Heart left ventricle (tissue), 16 donors: ENCODE measurements at regions of chr11 and their contacts with region 1.

Region 1: GRCh38 chr11:76207642-76208401 is 1.5 kb upstream of the WNT11 start:
- DNase-seq: peak; percentile 79 to 91 (median 84)
- ATAC-seq: peak; percentile 61 to 80 (median 71)
- H3K4me3 ChIP-seq: peak overlapping the region; percentile 45 to 82 (median 68)
- H3K27ac ChIP-seq: peak overlapping the region in 8 of 12 donors; percentile 55 to 84 (median 75)
- H3K4me1 ChIP-seq: peaks cover 0 to 61% (median 34%) of the 10 kb centered on the region in 12 donors
- H3K27me3 ChIP-seq: peaks cover 0 to 75% (median 0%) of the 10 kb centered on the region in 9 donors
- CTCF ChIP-seq: peak; percentile 96 to 99 (median 98)
- POLR2A ChIP-seq: no peak

Region 2: GRCh38 chr11:75896843-75897419 is 310.9 kb before region 1 on chr11:
- intact Hi-C with region 1: loop called in 3 of 10 experiments (anchors 2 to 5 kb)
- DNase-seq: no peak
- ATAC-seq: peak in 2 of 4 donors; percentile 33 to 43
- H3K4me3 ChIP-seq: no peak overlapping the region
- H3K27ac ChIP-seq: no peak overlapping the region
- H3K4me1 ChIP-seq: peaks cover 0 to 25% (median 5%) of the 10 kb centered on the region in 12 donors
- H3K27me3 ChIP-seq: no peaks in the 10 kb centered on the region
- CTCF ChIP-seq: peak; percentile 56 to 83 (median 74)
- POLR2A ChIP-seq: no peak

Region 3: DNA sequence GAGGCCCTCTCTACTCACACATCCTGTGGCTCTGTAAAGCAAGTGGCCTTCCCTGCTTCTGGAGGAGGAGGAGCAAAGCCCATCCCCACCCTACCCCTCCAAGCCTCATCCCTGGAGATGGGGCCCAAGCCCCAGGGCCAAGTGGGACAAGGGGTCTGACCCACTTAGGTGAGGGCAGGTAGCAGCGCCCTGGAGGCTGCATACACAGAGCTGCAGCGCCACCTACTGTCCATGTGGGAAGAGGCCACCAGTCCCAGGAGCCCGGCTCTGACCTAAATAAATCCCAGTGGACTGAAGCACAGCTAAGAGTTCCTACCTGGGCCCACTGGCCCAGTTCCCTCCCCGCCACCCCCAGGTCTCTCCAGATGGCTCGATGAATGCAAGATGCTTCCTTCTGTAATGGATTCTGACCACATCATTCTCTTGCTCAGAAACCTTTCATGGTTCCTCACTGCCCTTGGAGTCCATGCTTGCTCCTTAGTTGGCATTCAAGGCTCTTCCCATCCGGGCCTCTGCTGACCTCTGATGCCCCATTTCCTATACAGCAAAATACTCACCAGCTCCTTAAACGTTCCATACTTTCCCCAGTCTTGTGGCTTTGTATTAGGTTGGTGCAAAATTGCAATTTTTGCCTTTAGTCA is 111.0 kb after region 1 on chr11:
- intact Hi-C with region 1: loop called (anchors 1 to 5 kb)
- DNase-seq: peak; percentile 77 to 89 (median 78)
- ATAC-seq: peak; percentile 83 to 93 (median 90)
- H3K4me3 ChIP-seq: no peak overlapping the region
- H3K27ac ChIP-seq: no peak overlapping the region
- H3K4me1 ChIP-seq: peaks cover 0 to 13% (median 2%) of the 10 kb centered on the region in 12 donors
- H3K27me3 ChIP-seq: peaks cover 0 to 24% (median 5%) of the 10 kb centered on the region in 9 donors
- CTCF ChIP-seq: peak; percentile 83 to 95 (median 92)
- POLR2A ChIP-seq: no peak

Region 4: DNA sequence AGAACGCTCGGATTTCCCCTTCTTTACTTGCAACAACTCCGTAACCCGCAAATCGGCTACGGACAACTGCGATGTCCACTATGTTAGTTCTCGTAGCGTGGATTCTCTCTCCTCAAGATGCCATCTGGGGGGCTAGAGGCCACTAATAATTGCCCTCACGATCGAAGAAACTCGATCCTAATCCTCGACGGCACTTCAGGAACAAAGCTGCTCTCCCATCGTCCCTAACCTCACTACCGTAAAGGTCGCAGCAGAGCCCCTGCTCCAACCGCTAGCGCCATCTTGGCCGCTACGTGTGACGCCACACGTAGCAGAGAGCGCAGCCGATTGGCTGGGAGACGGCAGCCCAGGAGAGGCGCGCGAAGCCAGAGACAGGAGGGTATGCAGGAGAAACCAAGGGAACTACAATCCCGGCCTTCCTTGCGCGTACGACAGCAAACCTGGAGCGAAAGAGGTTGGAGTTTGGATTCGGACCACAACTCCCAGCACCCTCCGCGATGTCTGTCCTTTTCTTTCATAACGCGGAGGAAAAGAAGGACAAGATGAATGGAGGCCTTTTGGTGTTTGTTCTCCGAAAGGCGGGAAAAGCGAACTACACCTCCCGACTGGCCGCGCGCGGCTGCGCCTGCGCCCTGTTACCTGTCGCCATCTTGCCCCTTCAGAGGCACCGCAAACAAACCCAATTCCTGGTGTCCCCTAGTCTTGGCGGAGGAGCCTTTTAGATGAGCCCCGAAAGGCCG is 236.7 kb after region 1 on chr11 and contains the start of gene EMSY:
- intact Hi-C with region 1: loop called in 2 of 10 experiments (anchors 5 kb)
- DNase-seq: peak; percentile 97 to 98 (median 98)
- ATAC-seq: peak; percentile 96 to 98 (median 98)
- H3K4me3 ChIP-seq: peak within 1 kb of the TSS; percentile 71 to 100 (median 94)
- H3K27ac ChIP-seq: peak within 1 kb of the TSS; percentile 83 to 98 (median 92)
- H3K4me1 ChIP-seq: peaks cover 0 to 28% (median 14%) of the 10 kb centered on the region in 12 donors
- H3K27me3 ChIP-seq: no peaks in the 10 kb centered on the region
- CTCF ChIP-seq: peak in 1 of 12 donors; percentile 9
- POLR2A ChIP-seq: peak; percentile 91 to 95
- total RNA-seq, gene EMSY: 14.5 to 37.6 (median 18.6) TPM

Region 5: DNA sequence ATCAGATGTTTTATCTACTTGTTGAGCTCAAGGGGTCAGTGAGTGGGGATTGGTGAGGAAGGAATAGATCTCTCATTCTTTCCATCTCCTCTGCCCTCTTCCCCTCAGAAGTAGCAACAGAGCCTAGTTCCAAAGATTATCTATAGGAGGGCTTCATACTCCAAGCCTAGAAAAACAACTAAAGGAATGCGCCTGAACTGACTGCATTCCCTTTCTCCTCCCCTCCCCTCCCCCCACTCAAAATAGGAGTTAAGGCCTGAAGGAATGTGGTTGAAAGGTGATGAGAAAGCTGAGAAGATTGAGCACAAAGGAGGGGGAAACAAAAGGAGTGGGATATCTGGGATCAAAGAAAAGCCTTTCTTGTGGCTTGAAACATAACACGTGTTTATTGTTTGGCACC is 247.5 kb after region 1 on chr11:
- intact Hi-C with region 1: no loop called
- DNase-seq: no peak
- ATAC-seq: no peak
- H3K4me3 ChIP-seq: no peak overlapping the region
- H3K27ac ChIP-seq: no peak overlapping the region
- H3K4me1 ChIP-seq: peaks cover 0 to 8% (median 0%) of the 10 kb centered on the region in 12 donors
- H3K27me3 ChIP-seq: no peaks in the 10 kb centered on the region
- CTCF ChIP-seq: no peak
- POLR2A ChIP-seq: no peak

Region 6: GRCh38 chr11:76512851-76513653 is 305.2 kb after region 1 on chr11:
- intact Hi-C with region 1: loop called in 8 of 10 experiments (anchors 2 to 10 kb)
- DNase-seq: no peak
- ATAC-seq: no peak
- H3K4me3 ChIP-seq: no peak overlapping the region
- H3K27ac ChIP-seq: no peak overlapping the region
- H3K4me1 ChIP-seq: peaks cover 0 to 14% (median 1%) of the 10 kb centered on the region in 12 donors
- H3K27me3 ChIP-seq: no peaks in the 10 kb centered on the region
- CTCF ChIP-seq: peak; percentile 17 to 66 (median 44)
- POLR2A ChIP-seq: no peak